Sciatic nerve (tissue), 2 donors: ENCODE measurements at regions of chr18 and their contacts with region 1.

Region 1: GRCh38 chr18:8654503-8655451 is 45.5 kb downstream of the RAB12 start:
- DNase-seq: no peak
- ATAC-seq: no peak

Region 2: GRCh38 chr18:6677086-6677485 is 1977.7 kb before region 1 on chr18:
- intact Hi-C with region 1: no loop called
- DNase-seq: no peak
- ATAC-seq: no peak

Region 3: DNA sequence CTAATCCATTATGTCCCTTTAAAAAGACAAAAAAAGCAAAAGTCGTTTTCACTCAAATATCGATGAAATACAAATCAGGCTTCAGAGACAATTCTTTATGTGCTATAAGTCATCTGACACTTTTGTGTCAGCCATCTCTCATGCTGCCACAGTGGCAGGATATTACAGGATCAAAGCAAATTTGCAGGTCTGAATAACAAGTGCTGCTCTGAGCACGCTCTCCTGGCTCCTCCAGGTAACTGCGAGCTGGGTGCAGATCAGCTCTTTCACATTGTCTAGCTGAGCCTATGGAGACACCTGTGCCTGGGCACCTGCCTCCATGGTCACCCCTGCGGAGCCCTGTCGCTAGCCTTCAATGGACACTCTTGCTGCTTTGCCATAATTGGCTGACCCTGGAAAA is 295.7 kb before region 1 on chr18:
- intact Hi-C with region 1: no loop called
- DNase-seq: no peak
- ATAC-seq: no peak

Region 4: DNA sequence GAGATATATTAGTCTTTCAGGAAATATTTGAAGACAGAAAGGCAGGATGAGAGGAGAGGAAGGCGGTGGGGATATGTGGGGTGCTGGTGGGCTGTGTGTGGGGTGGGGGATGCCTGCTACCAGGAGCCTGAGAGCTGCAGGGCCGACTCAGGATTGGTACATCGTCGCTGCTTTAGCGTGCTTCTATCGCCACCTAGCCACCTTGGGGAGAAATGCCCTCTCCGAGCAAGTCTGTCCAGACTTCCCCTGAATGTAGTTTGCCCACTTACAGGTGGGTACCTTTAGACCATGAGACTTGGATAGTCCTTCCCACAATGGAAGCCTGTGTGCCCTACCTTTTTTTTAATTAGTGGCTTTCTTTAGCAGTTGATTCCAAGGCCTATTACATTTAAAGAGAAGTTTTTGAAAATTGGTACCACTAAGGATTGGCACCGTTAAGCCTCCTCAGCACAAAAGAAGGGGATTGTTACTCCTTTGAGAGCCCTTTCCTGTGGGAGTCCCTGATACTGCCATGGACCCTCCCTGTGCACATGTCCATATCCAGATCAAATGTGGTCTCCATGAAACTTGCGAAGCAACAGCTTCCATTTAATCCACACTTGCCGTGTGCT is 333.6 kb after region 1 on chr18:
- intact Hi-C with region 1: loop called (anchors 10 kb)
- DNase-seq: peak; percentile 73
- ATAC-seq: peak; percentile 82

Region 5: GRCh38 chr18:10289951-10290637 is 1635.3 kb after region 1 on chr18:
- intact Hi-C with region 1: no loop called
- DNase-seq: no peak
- ATAC-seq: no peak